Ascending aorta (tissue), 2 donors: ENCODE measurements at regions of chr1 and their contacts with region 1.

Region 1: GRCh38 chr1:23019094-23019862 is at the start of gene KDM1A:
- DNase-seq: peak; percentile 87 to 98
- H3K4me3 ChIP-seq: peak within 1 kb of the TSS; percentile 74 to 79
- H3K27ac ChIP-seq: peak within 1 kb of the TSS; percentile 68 to 78
- H3K4me1 ChIP-seq: no peaks in the 10 kb centered on the region
- H3K27me3 ChIP-seq: no peaks in the 10 kb centered on the region
- CTCF ChIP-seq: peak in 1 of 3 experiments; percentile 16
- total RNA-seq, gene KDM1A: 28.7 TPM

Region 2: GRCh38 chr1:23177438-23178380 is 158.4 kb after region 1 on chr1:
- intact Hi-C with region 1: loop called (anchors 5 kb)
- DNase-seq: peak in 1 of 2 donors; percentile 85
- H3K4me3 ChIP-seq: peak overlapping the region; percentile 57 to 73
- H3K27ac ChIP-seq: peak overlapping the region; percentile 89 to 92
- H3K4me1 ChIP-seq: peaks cover 0 to 2% of the 10 kb centered on the region in 2 donors
- H3K27me3 ChIP-seq: no peaks in the 10 kb centered on the region
- CTCF ChIP-seq: peak in 1 of 3 experiments; percentile 46